ENCODE measurements at regions of chr4 and their contacts with region 1.

Region 1: DNA sequence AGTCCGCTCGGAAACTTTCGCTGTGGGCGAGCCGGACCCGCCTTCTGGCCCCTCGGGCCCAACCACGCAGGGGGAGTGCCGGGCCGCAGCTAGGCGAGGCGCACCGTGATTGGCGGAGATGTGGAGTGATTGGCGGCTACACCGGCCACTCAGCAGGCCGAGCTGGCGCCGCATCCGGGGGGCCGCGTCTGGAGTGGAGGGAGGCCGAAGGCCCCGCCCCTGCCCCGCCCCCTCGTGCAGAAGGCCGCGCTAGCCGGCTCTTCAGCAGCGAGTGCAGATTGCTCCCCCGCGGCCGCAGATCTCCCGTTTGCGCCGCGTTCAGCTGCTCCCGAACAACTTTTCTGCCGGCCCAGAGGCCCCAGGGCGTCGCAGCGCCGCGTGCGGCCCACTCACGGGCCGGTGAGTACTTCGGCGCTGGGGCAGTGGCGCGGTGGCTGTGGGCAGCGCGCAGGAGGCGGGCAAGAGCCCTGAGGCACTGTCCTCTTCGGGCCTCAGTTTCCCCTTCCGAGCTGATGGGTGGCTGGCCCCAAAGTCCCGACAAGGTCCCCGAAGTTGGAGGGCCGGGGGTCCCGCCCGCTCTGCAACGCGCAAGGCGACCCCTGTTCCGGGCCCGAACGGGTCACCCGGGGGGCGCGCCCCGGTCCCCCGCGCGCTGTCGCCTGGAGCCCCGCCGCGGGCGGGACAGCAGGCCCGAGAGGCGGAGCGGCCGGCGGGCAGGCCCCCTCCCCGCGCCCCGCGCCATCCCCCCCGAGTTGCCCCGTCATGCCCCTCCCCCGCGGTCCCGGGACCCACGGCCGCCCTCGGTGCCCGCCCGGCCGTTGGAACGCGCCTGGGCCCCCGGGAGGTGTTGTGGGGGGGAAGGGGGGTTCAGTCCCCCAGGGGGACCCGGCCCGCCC is at the start of gene WFS1:
- DNase-seq: peak; percentile 99
- H3K4me3 ChIP-seq: peak within 1 kb of the TSS; percentile 94
- H3K27ac ChIP-seq: peak within 1 kb of the TSS; percentile 67
- H3K4me1 ChIP-seq: peaks cover 14% of the 10 kb centered on the region
- H3K27me3 ChIP-seq: no peaks in the 10 kb centered on the region
- CTCF ChIP-seq: no peak
- total RNA-seq, gene WFS1: 14.0 and 15.6 TPM in 2 replicates

Region 2: GRCh38 chr4:6423575-6423974 is 153.7 kb after region 1 on chr4:
- CTCF ChIA-PET with region 1: no interaction called
- POLR2A ChIA-PET with region 1: no interaction called
- intact Hi-C with region 1: no loop called
- DNase-seq: no peak
- H3K4me3 ChIP-seq: no peak overlapping the region
- H3K27ac ChIP-seq: no peak overlapping the region
- H3K4me1 ChIP-seq: no peaks in the 10 kb centered on the region
- H3K27me3 ChIP-seq: peaks cover 12% of the 10 kb centered on the region
- CTCF ChIP-seq: no peak

Region 3: DNA sequence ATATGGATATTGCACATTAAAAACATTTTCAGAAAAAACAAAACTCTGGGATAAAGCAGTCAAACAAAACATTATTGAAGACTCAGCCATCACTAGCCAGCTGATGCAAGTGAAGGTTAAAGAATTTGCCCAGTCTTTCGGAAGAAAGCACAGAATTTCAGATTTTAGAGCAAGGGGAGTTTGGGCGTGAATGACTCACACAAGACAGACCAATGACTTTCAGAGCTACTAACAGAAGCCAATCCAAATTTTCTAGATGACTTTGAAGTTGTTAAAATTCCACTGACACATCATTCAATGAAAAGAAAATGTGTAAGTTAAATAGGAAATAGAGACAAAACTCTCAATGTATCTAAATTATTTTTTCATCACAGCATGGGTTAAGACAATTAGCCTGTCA is 435.8 kb after region 1 on chr4:
- CTCF ChIA-PET with region 1: no interaction called
- POLR2A ChIA-PET with region 1: interaction called, 14 read pairs
- intact Hi-C with region 1: no loop called
- DNase-seq: no peak
- H3K4me3 ChIP-seq: no peak overlapping the region
- H3K27ac ChIP-seq: no peak overlapping the region
- H3K4me1 ChIP-seq: peaks cover 17% of the 10 kb centered on the region
- H3K27me3 ChIP-seq: no peaks in the 10 kb centered on the region
- CTCF ChIP-seq: no peak

Measured in A673 (cell line).